ENCODE measurements at regions of chr12 and their contacts with region 1.

Region 1: DNA sequence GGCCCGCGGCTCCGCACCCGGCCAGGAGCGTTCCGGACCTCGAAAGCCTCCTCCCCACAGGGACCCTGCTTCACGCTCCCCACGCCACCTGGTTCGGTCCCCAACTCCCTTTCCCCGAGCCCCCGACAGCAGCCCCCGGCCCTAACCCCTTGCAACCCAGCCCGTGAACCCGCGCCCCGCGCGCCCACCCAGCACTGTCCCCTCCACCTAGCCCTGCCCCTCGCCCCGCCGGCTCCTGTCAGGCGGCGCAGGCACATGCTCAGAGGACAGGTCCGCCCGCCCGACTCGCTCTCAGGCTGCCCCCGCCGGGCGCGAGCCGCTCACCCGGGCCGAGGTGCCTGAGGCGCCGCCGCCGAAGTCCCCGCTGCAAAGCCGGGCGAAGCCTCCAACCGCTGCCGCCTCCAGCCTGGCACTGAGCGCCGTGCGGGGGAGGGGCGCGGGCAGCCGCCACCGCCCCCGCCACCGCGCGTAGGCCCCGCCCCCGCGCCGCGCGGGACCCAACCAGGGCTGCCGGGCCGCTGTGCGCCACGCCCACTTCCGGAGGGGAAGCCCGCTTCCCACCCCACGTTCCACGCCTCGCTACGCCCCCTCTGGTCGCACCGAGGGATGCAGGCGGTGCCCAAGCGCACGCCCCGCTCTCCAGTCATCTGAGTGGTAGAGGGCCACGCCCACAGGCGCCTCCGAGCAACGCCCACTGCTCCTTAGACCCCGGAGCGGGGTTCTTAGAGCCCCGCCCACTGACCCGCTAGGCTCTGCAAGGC is at the start of gene CORO1C:
- DNase-seq: peak; percentile 98
- ATAC-seq: peak; percentile 87 to 92
- total RNA-seq, gene CORO1C: 95.0 to 109 TPM

Region 2: DNA sequence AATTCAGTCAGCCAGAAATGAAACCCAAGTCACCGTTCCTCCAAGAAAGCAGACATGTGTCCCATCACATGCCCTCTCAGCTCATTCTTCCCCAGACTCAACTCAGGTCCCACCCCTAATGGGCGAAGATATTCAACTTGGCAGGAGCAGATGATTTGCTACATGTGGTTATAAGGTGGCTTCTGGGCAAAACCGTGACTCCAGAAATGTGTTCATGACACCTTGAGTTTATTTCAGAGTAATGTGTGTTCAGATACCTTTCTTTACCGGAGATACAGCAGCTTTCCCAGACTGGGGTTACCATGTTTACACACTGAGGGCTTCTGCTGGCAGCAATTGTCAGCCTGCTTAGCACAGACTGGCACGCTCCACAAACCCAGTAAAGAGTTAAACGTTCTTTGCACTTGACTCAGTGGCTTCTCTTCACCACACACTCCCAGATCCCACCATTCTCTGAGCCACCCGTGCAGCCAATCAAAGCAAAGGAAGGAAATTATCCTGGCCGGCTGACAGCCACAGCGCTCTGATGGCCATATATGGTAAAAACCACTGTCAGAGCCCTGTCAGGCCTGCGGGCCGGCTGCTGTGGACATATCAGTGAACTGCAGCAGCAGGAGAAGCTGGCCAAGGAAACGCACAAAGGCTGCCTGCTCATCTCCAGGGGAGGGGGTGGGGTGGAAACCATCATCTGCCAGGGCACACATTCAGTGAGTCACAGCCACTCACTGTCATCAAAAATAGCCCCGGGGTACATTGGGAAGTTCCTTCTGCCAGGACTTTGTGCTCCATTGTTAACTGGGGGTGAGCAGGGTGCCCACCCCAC is 39.9 kb before region 1 on chr12:
- intact Hi-C with region 1: loop called in 1 of 2 experiments (anchors 2 kb)
- DNase-seq: peak; percentile 97
- ATAC-seq: peak; percentile 95

Region 3: DNA sequence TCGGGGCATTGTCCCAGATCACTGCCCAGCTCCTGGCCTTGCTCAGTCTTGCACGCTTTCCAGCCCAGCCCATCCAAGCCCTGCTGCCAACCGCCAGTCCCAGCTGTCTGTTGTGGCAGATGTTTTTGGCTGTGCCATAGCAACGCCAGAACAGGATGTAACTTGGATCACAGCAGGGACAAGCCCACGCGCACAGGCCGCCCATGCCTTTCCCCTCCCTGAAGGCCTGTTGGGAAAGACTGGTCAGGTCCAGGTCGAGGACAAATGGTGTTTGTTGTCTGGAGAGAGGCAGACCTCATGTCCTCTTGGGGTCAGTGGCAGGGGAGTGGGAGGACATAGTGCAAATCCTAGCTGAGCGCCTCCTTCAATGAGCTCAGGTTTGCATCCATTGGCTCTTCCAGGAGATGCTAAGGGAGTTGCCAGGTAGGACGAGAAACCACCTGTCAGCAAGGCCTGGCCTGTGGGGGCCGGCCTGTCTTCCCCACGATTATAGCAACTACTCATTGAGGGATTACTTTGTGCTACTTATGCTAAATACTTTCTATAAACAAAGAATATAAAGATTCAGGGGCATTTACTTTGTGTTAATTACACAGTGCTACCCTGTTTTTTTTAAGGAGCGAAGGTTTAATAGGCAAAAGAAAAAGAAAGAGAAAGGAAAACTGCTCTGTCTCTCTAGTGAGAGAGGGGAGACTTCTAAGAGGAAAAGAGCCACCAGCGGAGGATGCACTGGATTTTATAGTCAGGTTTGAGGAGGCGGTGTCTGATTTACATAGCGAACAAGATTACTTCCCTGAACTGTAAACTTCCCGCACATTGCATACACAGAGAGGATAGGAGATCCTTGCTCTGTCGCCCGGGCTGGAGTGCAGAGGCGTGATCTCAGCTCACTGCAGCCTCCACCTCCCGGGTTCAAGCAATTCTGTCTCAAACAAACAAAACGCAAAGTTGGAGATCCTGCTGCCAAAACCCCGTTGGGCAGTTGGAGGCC is 42.8 kb after region 1 on chr12:
- intact Hi-C with region 1: loop called in 1 of 2 experiments (anchors 5 kb)
- DNase-seq: peak; percentile 91
- ATAC-seq: peak; percentile 93 to 95

Region 4: GRCh38 chr12:108788076-108788782 is 56.9 kb after region 1 on chr12:
- intact Hi-C with region 1: no loop called
- DNase-seq: peak; percentile 63
- ATAC-seq: peak; percentile 77 to 88

Region 5: GRCh38 chr12:108803428-108804105 is 72.3 kb after region 1 on chr12:
- intact Hi-C with region 1: loop called in 1 of 2 experiments (anchors 5 kb)
- DNase-seq: peak; percentile 73
- ATAC-seq: peak; percentile 60 to 73